CD14-positive monocyte (primary cell): ENCODE measurements at regions of chr1 and their contacts with region 1.

Region 1: GRCh38 chr1:179365320-179366092 is at the start of gene AXDND1:
- DNase-seq: peak; percentile 92 to 94 (median 93)
- H3K4me3 ChIP-seq: peak within 1 kb of the TSS; percentile 58 to 83 (median 77)
- H3K4me3 Mint-ChIP-seq: peak within 1 kb of the TSS; percentile 89 to 98
- H3K27ac ChIP-seq: peak within 1 kb of the TSS; percentile 99
- H3K27ac Mint-ChIP-seq: peak within 1 kb of the TSS; percentile 99 to 100 (median 100)
- H3K4me1 ChIP-seq: peaks cover 11 to 14% of the 10 kb centered on the region in 2 donors
- H3K4me1 Mint-ChIP-seq: peaks cover 17% of the 10 kb centered on the region
- H3K27me3 ChIP-seq: no peaks in the 10 kb centered on the region
- H3K27me3 Mint-ChIP-seq: peaks cover 0 to 6% (median 1%) of the 10 kb centered on the region in 3 donors
- CTCF ChIP-seq: no peak
- polyA plus RNA-seq, gene AXDND1: 0.09 TPM in 1 of 3 donors, not detected in the others

Region 2: DNA sequence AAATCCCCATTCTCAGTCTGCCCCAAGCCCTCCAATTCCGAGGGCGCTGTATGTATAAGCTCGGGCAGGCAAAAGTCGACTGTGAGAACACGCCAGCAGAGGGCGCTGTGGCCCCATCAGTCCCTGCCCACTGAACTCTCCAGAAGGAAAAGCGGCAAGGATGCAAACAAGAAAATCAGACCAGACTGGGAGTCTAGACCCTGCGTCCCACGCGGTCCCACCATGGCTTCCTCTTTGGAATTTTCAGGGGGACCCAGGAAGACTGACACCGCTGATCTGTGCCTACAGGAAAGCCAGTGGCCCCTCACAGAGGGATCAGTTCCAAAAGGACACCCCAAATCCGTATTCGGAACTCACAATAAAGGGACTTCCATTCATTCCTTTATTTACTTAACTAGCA is 833.1 kb before region 1 on chr1:
- intact Hi-C with region 1: loop called in 1 of 2 experiments (anchors 10 kb)
- DNase-seq: peak; percentile 61 to 78 (median 74)
- H3K4me3 ChIP-seq: no peak overlapping the region
- H3K4me3 Mint-ChIP-seq: peak overlapping the region in 1 of 2 donors; percentile 31
- H3K27ac ChIP-seq: no peak overlapping the region
- H3K27ac Mint-ChIP-seq: no peak overlapping the region
- H3K4me1 ChIP-seq: peaks cover 0 to 3% of the 10 kb centered on the region in 2 donors
- H3K4me1 Mint-ChIP-seq: peaks cover 8% of the 10 kb centered on the region
- H3K27me3 ChIP-seq: no peaks in the 10 kb centered on the region
- H3K27me3 Mint-ChIP-seq: peaks cover 0 to 3% (median 0%) of the 10 kb centered on the region in 3 donors
- CTCF ChIP-seq: peak; percentile 93

Region 3: GRCh38 chr1:178870944-178871343 is 494.6 kb before region 1 on chr1 and contains the start of gene ANGPTL1:
- intact Hi-C with region 1: no loop called
- DNase-seq: no peak
- H3K4me3 ChIP-seq: no peak within 1 kb of the TSS
- H3K4me3 Mint-ChIP-seq: no peak within 1 kb of the TSS
- H3K27ac ChIP-seq: no peak within 1 kb of the TSS
- H3K27ac Mint-ChIP-seq: peak within 1 kb of the TSS in 1 of 7 donors; percentile 46
- H3K4me1 ChIP-seq: peaks cover 0 to 4% of the 10 kb centered on the region in 2 donors
- H3K4me1 Mint-ChIP-seq: peaks cover 6% of the 10 kb centered on the region
- H3K27me3 ChIP-seq: no peaks in the 10 kb centered on the region
- H3K27me3 Mint-ChIP-seq: no peaks in the 10 kb centered on the region
- CTCF ChIP-seq: no peak
- polyA plus RNA-seq, gene ANGPTL1: not detected

Region 4: DNA sequence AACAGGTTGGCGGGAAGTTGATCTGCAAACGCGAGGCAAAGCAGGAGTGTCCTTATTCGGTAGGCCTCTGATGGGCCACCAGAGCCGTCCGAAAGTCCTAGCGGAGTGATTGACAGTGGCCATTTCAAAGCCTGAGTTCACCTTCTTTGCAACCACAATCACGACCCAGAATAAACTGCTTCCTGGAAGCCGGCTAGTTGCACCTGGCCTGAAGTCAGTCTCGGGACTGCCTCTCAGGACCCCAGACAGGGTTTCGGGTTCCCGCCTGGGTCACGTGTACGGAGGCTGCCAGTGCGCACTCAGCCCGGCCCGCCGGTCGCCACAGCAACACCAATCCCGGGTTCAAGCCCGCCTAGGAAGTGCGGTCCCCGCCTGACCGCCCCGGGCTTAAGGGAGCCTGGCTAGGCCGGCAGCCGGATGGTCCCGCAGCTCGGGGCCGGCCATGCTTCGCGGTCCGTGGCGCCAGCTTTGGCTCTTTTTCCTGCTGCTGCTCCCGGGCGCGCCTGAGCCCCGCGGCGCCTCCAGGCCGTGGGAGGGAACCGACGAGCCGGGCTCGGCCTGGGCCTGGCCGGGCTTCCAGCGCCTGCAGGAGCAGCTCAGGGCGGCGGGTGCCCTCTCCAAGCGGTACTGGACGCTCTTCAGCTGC is 283.7 kb before region 1 on chr1 and contains the start of gene TOR3A:
- intact Hi-C with region 1: loop called (anchors 5 kb)
- DNase-seq: peak; percentile 68 to 74 (median 69)
- H3K4me3 ChIP-seq: peak within 1 kb of the TSS; percentile 68 to 83 (median 77)
- H3K4me3 Mint-ChIP-seq: peak within 1 kb of the TSS; percentile 96 to 98
- H3K27ac ChIP-seq: peak within 1 kb of the TSS; percentile 91 to 93
- H3K27ac Mint-ChIP-seq: peak within 1 kb of the TSS; percentile 94 to 97 (median 95)
- H3K4me1 ChIP-seq: peaks cover 19 to 24% of the 10 kb centered on the region in 2 donors
- H3K4me1 Mint-ChIP-seq: peaks cover 27% of the 10 kb centered on the region
- H3K27me3 ChIP-seq: no peaks in the 10 kb centered on the region
- H3K27me3 Mint-ChIP-seq: peaks cover 0 to 2% (median 0%) of the 10 kb centered on the region in 3 donors
- CTCF ChIP-seq: no peak
- polyA plus RNA-seq, gene TOR3A: 50.0 to 67.8 (median 60.9) TPM

Region 5: DNA sequence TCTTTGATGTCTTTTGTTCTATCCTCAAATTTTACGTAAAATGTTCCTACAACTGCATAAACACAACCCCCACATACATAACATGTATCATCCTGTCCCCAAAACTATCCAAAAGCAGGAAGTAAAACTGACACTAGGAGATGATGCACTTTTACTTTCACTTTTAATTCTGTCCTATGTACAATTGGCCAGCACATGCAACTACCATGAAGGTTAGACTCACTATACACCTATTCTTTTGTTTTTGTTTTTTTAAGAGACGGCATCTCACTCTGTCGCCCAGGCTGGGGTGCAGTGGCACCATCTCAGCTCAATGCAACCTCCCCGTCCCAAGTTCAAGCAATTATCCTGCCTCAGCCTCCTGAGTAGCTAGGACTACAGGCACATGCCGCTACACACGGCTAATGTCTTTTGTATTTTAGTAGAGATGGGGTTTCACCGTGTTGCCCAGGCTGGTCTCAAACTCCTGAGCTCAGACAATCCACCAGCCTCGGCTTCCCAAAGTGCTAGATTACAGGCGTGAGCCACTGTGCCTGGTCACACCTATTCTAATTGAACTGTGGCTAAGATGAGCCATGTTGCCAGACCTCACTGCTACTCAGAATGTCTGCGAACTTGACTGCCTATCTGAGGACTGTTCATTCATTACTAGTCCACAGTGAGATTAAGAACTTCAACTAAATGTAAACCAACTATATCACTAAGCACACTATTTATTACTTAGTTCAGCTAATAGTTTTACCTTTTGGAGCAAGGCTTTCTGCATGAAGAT is 235.6 kb before region 1 on chr1:
- intact Hi-C with region 1: loop called (anchors 5 to 10 kb)
- DNase-seq: peak; percentile 54 to 80 (median 72)
- H3K4me3 ChIP-seq: peak overlapping the region in 1 of 3 experiments; percentile 52
- H3K4me3 Mint-ChIP-seq: peak overlapping the region; percentile 52 to 81
- H3K27ac ChIP-seq: peak overlapping the region; percentile 54 to 71
- H3K27ac Mint-ChIP-seq: peak overlapping the region; percentile 26 to 93 (median 88)
- H3K4me1 ChIP-seq: peaks cover 11 to 12% of the 10 kb centered on the region in 2 donors
- H3K4me1 Mint-ChIP-seq: peaks cover 16% of the 10 kb centered on the region
- H3K27me3 ChIP-seq: no peaks in the 10 kb centered on the region
- H3K27me3 Mint-ChIP-seq: peaks cover 0 to 1% (median 0%) of the 10 kb centered on the region in 3 donors
- CTCF ChIP-seq: no peak

Region 6: DNA sequence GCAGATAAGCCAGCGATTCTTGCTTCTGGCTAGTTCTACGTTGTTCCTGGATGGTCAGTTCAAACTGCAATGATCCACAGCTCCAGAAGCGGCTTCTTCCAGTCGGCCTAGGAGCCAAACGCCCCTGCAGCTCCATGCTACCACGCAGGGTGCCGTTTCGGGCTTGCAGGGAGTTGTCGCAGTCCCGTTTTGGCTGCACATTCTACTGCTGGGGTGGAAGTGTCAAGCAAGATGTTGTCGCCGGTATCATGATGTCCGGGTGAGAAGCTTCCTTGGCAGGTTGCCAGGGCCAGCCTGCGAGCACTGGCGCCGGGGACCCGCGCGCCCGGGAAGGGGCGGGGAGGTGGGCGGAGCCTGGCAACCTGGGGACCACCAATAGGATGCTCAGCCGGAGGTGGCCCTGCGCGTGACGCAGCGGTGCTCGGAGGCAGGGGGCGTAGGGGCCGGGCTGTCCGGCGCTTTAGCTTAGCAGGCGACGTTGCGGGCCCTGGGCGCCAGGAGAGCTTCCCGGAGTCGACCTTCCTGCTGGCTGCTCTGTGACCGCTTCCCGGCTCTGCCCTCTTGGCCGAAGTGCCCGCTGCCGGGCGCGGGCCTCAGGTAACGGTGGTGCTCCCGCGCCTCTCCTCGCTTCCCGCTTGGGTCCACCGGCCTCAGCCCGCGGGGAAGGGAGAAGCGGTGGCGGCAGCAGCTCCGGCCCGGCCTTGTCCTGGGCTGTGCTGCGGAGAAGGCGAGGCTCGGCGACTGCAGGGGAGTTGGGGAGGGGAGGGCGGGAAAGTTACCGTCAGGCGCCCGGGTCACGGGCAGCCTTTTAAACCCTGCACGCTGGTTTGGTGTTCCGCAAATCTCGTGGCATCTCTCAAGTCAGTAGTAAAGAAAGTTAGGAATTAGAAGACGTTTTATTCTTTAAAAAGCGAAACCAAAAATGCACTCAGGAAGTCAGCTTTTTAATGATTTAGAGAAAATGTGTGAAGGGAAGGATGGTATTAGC is 71.9 kb before region 1 on chr1 and contains the start of gene SOAT1:
- intact Hi-C with region 1: loop called (anchors 5 kb)
- DNase-seq: peak; percentile 75 to 85 (median 83)
- H3K4me3 ChIP-seq: peak within 1 kb of the TSS; percentile 74 to 89 (median 88)
- H3K4me3 Mint-ChIP-seq: peak within 1 kb of the TSS; percentile 89 to 95
- H3K27ac ChIP-seq: peak within 1 kb of the TSS; percentile 87 to 88
- H3K27ac Mint-ChIP-seq: peak within 1 kb of the TSS; percentile 95 to 98 (median 97)
- H3K4me1 ChIP-seq: peaks cover 37 to 53% of the 10 kb centered on the region in 2 donors
- H3K4me1 Mint-ChIP-seq: peaks cover 50% of the 10 kb centered on the region
- H3K27me3 ChIP-seq: no peaks in the 10 kb centered on the region
- H3K27me3 Mint-ChIP-seq: peaks cover 0 to 2% (median 0%) of the 10 kb centered on the region in 3 donors
- CTCF ChIP-seq: peak; percentile 18
- polyA plus RNA-seq, gene SOAT1: 15.8 to 158 (median 105) TPM

Region 7: DNA sequence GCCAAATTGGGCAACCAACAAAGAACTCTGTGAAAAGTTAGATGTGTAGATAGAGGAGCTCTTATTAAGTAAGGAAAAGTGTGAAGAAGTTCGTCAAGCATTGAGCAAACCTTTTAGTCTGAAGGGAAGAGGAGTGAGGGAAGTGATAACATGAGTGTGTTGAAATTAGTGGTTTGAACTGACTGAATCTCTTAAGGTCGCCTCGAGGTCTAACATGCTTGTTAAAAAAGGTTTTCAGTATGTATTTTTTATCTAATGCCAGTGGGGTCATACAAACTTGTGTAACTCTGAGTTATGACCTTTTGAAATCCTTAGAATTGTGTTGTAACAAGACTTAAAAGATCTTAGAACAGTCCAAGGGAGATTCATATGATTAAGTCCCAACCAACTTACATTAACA is 37.8 kb before region 1 on chr1:
- intact Hi-C with region 1: loop called in 1 of 2 experiments (anchors 5 kb)
- DNase-seq: peak; percentile 85 to 95 (median 89)
- H3K4me3 ChIP-seq: peak overlapping the region in 1 of 3 experiments; percentile 64
- H3K4me3 Mint-ChIP-seq: peak overlapping the region in 1 of 2 donors; percentile 33
- H3K27ac ChIP-seq: peak overlapping the region; percentile 51 to 82
- H3K27ac Mint-ChIP-seq: peak overlapping the region; percentile 92 to 95 (median 93)
- H3K4me1 ChIP-seq: peaks cover 57 to 61% of the 10 kb centered on the region in 2 donors
- H3K4me1 Mint-ChIP-seq: peaks cover 71% of the 10 kb centered on the region
- H3K27me3 ChIP-seq: no peaks in the 10 kb centered on the region
- H3K27me3 Mint-ChIP-seq: no peaks in the 10 kb centered on the region
- CTCF ChIP-seq: no peak

Region 8: DNA sequence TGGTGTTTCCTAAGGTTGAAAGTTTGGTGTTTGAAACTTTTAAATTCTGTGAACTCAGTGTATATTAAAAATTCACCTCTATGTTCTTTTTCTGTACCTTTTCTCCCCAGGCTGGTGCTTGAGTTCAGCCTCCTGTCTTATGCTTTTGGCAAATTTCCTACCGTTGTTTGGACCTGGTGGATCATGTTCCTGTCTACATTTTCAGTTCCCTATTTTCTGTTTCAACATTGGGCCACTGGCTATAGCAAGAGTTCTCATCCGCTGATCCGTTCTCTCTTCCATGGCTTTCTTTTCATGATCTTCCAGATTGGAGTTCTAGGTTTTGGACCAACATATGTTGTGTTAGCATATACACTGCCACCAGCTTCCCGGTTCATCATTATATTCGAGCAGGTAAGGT is 24.6 kb before region 1 on chr1:
- intact Hi-C with region 1: no loop called
- DNase-seq: peak; percentile 57 to 77 (median 70)
- H3K4me3 ChIP-seq: peak overlapping the region in 2 of 3 experiments; percentile 27 to 41
- H3K4me3 Mint-ChIP-seq: peak overlapping the region; percentile 53 to 69
- H3K27ac ChIP-seq: peak overlapping the region in 1 of 2 donors; percentile 71
- H3K27ac Mint-ChIP-seq: peak overlapping the region; percentile 83 to 92 (median 89)
- H3K4me1 ChIP-seq: peaks cover 11% of the 10 kb centered on the region in 2 donors
- H3K4me1 Mint-ChIP-seq: peaks cover 11% of the 10 kb centered on the region
- H3K27me3 ChIP-seq: no peaks in the 10 kb centered on the region
- H3K27me3 Mint-ChIP-seq: no peaks in the 10 kb centered on the region
- CTCF ChIP-seq: no peak

Region 9: DNA sequence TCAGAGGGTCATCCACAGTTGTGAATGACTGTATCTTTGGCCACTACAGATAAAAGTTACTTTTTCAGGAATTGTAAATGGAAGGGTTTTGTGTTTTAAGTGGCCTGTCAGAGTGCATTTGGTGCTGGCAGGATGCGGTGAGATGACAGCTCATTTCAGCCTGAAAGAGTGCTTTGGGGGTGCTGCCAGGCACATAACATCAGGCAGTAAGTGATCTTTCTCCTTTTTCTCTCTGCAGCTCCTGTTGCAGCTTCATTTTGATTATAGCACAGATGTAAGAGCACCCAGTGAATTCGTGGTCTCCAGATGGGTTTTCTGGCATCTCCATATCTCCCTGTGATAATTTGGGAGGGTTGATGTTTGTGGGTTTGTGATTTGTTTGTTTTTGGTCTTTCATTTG is 362.8 kb after region 1 on chr1:
- intact Hi-C with region 1: no loop called
- DNase-seq: no peak
- H3K4me3 ChIP-seq: no peak overlapping the region
- H3K4me3 Mint-ChIP-seq: no peak overlapping the region
- H3K27ac ChIP-seq: no peak overlapping the region
- H3K27ac Mint-ChIP-seq: no peak overlapping the region
- H3K4me1 ChIP-seq: no peaks in the 10 kb centered on the region
- H3K4me1 Mint-ChIP-seq: no peaks in the 10 kb centered on the region
- H3K27me3 ChIP-seq: peaks cover 8 to 16% of the 10 kb centered on the region in 2 donors
- H3K27me3 Mint-ChIP-seq: peaks cover 0 to 8% (median 4%) of the 10 kb centered on the region in 3 donors
- CTCF ChIP-seq: no peak